HEK293T (cell line): ENCODE measurements at regions of chr19 and their contacts with region 1.

Region 1: GRCh38 chr19:1577090-1577928 is 9.2 kb upstream of the MEX3D start:
- DNase-seq: no peak

Region 2: DNA sequence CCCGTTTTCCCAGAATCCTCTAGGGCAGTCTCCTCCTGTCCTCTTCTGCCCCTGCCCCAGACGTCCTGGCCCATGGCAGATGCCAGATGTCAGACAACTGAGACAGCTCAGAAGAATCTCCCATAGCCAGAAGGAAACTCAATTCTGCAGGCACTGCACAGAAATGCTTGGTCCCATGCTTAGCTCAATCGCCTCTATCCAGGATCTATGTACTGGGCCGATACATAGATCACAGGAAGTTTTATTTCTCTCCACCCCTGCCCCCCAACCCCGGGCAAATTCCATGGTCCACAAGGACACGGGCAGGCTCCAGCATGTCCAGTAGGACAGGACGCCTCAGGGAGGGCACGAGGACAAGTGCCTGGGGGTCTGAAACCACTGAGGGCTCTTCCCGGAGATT is 10.6 kb after region 1 on chr19:
- CTCF ChIA-PET with region 1: interaction called, 3 read pairs
- POLR2A ChIA-PET with region 1: interaction called, 19 read pairs
- DNase-seq: no peak

Region 3: DNA sequence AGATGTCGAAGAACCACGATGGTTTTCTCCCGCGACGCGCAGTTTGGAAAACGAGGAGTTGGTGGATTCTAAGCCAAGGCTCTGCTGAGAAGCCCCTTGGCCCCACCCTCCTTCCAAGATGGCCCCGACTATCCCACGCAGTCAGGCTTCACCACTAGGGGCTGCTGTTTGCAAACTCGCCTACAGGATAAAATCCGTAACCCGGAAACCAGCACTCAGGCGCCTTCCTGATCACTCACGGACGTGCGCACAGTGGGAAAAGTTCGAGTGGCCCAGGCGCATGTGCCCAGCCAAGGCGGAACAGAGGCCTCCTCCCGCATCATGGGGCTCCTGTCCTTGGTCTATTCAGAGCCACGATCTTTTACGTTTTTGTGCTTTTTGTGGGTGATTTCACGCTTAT is 47.1 kb after region 1 on chr19:
- CTCF ChIA-PET with region 1: no interaction called
- POLR2A ChIA-PET with region 1: no interaction called
- DNase-seq: peak; percentile 81